Esophagus muscularis mucosa (tissue), 4 donors: ENCODE measurements at regions of chr5 and their contacts with region 1.

Region 1: DNA sequence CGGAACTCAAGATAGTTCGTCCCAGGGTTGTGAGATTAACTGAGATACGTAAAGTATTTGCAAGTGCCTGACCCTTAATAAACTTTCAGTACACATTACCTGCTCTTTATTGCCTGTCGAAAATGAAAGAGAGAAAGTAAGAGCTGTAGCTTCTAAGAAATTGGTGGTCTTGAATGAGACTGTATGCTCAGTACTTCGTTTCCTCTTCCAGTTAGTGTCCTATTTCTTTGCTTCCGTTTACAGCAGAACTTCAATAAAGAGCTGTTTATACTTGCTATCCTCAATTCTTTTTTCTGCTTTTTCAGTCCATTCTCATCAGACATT is 534 bp downstream of the SRFBP1 start:
- DNase-seq: no peak
- H3K4me3 ChIP-seq: peak overlapping the region; percentile 73 to 96 (median 81)
- H3K27ac ChIP-seq: peak overlapping the region; percentile 66 to 84 (median 74)
- H3K4me1 ChIP-seq: peaks cover 12 to 19% (median 17%) of the 10 kb centered on the region in 4 donors
- H3K27me3 ChIP-seq: no peaks in the 10 kb centered on the region
- CTCF ChIP-seq: no peak
- EP300 ChIP-seq: no peak
- POLR2A ChIP-seq: no peak

Region 2: GRCh38 chr5:122076664-122077365 is 114.5 kb after region 1 on chr5:
- intact Hi-C with region 1: loop called (anchors 5 kb)
- DNase-seq: peak; percentile 93
- H3K4me3 ChIP-seq: peak overlapping the region; percentile 64 to 77 (median 66)
- H3K27ac ChIP-seq: peak overlapping the region; percentile 64 to 87 (median 72)
- H3K4me1 ChIP-seq: peaks cover 14 to 33% (median 27%) of the 10 kb centered on the region in 4 donors
- H3K27me3 ChIP-seq: no peaks in the 10 kb centered on the region
- CTCF ChIP-seq: peak; percentile 63 to 79 (median 78)
- EP300 ChIP-seq: no peak
- POLR2A ChIP-seq: no peak